Sciatic nerve (tissue), 2 donors: ENCODE measurements at regions of chr13 and their contacts with region 1.

Region 1: GRCh38 chr13:90232291-90232690 is 1115.2 kb upstream of the MIR17HG start:
- DNase-seq: no peak
- ATAC-seq: no peak

Region 2: DNA sequence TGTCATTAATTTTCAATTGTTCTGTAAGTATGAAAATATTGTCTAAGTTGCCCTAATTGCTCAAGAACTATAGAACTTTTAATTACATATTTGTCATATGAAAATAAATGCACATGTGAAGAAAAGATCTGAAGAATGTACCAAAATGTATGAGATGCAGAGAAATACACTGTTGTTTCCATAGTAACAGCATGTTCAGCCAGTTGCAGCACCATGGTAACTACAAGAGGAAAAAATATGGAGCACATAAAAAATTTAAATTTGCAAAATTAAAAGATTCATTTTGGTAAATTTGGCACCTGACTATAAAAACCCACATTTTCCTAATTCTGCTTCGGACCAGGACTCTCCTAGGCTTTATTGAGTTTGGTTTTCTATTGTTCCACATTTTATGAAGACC is 54.8 kb before region 1 on chr13:
- intact Hi-C with region 1: loop called (anchors 2 kb)
- DNase-seq: no peak
- ATAC-seq: no peak